Right ventricle myocardium inferior (tissue), 1 donor: ENCODE measurements at regions of chr15 and their contacts with region 1.

Region 1: DNA sequence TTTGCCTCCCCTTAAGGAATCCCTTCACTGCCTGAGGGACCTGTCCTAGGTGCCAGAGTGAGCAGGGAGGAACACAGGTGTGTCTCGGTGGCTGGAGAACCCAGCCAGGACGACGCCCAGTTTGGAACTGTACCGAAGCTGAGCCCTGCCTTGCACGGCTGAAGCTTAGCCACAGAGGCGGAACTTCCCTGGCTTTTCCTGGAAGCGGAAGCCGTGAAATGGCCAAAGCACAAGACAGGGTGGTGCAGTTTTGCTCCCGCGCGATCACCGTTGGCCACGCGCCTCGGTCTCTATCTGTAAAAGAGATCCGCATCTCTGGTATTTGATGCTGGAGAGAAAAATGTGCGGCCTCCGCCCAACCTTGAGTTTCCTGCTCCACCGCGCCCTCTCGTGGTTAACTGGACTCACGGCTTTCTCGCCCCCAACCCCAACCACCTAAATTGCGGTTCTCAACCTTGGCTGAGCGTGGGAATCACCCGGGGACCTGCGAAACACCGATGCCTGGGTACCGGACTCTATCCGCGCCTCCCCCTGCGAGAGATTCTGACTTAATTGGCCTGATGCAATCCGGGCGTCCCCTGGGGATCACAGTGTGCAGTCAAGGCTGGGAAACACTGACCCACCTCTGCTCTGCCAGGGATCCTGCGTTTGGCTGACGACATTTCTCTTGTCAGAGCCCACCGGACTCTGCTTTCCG is 70.7 kb upstream of the ABHD2 start:
- DNase-seq: peak; percentile 86
- ATAC-seq: peak; percentile 64

Region 2: GRCh38 chr15:88904624-88905327 is 112.7 kb before region 1 on chr15:
- intact Hi-C with region 1: loop called (anchors 2 kb)
- DNase-seq: peak; percentile 86
- ATAC-seq: peak; percentile 81

Region 3: GRCh38 chr15:88913017-88913849 is 104.3 kb before region 1 on chr15 and contains the start of gene MFGE8:
- intact Hi-C with region 1: loop called (anchors 2 kb)
- DNase-seq: peak; percentile 89
- ATAC-seq: peak; percentile 82
- total RNA-seq, gene MFGE8: 321 TPM